PC-9 (cell line): ENCODE measurements at regions of chr9 and their contacts with region 1.

Region 1: DNA sequence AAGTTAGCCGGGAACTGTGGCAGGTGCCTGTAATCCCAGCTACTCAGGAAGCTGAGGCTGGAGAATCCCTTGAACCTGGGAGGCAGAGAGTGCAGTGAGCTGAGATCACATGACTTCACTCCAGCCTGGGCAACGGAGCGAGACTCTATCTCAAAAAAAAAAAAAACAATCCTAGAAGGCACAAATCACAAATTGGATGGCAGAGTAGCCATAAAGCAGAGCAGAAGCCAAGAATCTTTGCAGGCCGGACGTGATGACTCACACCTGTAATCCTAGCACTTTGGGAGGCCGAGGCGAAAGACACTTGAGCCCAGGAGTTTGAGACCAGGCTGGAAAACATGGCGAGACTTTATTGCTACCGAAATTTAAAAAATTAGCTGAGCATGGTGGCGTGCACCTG is 9.2 kb upstream of the FUBP3 start:
- DNase-seq: peak; percentile 38 to 44
- H3K4me3 ChIP-seq: no peak overlapping the region
- H3K27ac ChIP-seq: no peak overlapping the region
- H3K4me1 ChIP-seq: no peaks in the 10 kb centered on the region
- H3K27me3 ChIP-seq: no peaks in the 10 kb centered on the region
- CTCF ChIP-seq: no peak

Region 2: DNA sequence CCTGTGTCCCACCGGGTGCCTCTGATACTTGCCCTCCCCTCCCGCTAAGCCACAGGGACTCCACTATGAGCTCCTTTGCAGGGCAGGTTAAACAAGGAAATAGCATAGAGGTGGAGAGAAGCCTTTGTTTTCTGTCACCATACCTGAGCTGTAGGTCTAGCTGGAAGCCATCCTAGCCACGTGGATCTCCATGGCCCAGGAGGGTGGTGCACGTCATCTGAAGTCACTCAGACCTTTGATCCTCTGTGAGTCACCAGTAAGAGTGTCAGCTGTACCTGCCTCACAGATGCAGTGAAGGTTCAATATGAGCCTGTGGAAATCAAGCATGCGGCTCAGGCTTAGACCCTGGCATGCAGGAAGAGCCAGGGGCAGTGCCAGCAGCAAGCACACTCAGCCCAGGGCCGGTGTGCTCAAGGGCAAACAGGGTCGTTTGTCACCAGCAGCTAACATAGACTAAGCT is 70.4 kb before region 1 on chr9:
- CTCF ChIA-PET with region 1: interaction called, 15 read pairs
- POLR2A ChIA-PET with region 1: no interaction called
- intact Hi-C with region 1: no loop called
- DNase-seq: peak; percentile 87 to 95
- H3K4me3 ChIP-seq: no peak overlapping the region
- H3K27ac ChIP-seq: no peak overlapping the region
- H3K4me1 ChIP-seq: peaks cover 24% of the 10 kb centered on the region
- H3K27me3 ChIP-seq: no peaks in the 10 kb centered on the region
- CTCF ChIP-seq: no peak

Region 3: GRCh38 chr9:130549093-130549735 is 21.0 kb before region 1 on chr9:
- CTCF ChIA-PET with region 1: no interaction called
- POLR2A ChIA-PET with region 1: interaction called, 13 read pairs
- intact Hi-C with region 1: no loop called
- DNase-seq: no peak
- H3K4me3 ChIP-seq: no peak overlapping the region
- H3K27ac ChIP-seq: no peak overlapping the region
- H3K4me1 ChIP-seq: no peaks in the 10 kb centered on the region
- H3K27me3 ChIP-seq: no peaks in the 10 kb centered on the region
- CTCF ChIP-seq: no peak